Activated CD8-positive, alpha-beta T cell treated with anti-CD3 and anti-CD28 coated beads, Interleukin-2, amount 10 ng/mL, durations not matched to agents 7 days and 5 days (primary cell): ENCODE measurements at regions of chr1 and their contacts with region 1.

Region 1: DNA sequence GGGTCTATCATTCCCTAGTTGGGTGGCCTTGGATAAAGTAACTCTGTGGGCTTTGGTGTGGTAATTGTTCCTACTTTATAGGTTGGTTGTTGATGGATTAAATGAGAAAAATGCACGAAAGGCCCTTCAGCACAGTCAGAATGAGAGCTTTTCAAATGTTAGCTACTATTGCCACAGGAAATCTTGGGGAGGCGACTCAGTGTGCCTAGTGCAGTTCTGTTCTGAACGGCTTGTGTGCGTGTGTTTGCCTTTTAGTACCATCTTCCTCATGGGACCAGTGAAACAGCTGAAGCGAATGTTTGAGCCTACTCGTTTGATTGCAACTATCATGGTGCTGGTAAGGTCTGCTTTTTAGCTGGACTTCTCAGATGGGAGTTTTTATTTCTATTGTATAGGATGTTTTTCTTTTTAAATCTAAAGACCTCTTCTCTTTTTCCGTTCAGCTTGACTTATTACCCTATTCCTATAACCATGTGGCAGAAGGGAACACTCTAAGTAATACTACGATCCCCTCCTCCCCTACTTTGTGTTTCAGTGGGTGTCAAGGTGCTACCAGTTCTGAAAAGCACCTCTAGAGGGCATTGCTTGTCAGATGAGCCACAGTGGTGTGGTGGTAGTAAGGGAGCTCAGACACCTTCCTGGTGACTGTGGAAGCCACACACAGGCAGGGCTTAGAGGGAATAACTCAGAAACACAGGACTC is 9.2 kb downstream of the SFT2D2 start:
- DNase-seq: peak; percentile 65
- ATAC-seq: peak; percentile 93
- H3K4me3 Mint-ChIP-seq: no peak overlapping the region
- H3K27ac Mint-ChIP-seq: no peak overlapping the region
- H3K4me1 Mint-ChIP-seq: peaks cover 44% of the 10 kb centered on the region
- H3K27me3 Mint-ChIP-seq: no peaks in the 10 kb centered on the region

Region 2: GRCh38 chr1:168178638-168179437 is 56.2 kb before region 1 on chr1 and contains the start of gene TIPRL:
- CTCF ChIA-PET with region 1: interaction called, 14 read pairs
- POLR2A ChIA-PET with region 1: interaction called, 3 read pairs
- DNase-seq: peak; percentile 96
- ATAC-seq: peak; percentile 94
- H3K4me3 Mint-ChIP-seq: no peak within 1 kb of the TSS
- H3K27ac Mint-ChIP-seq: no peak within 1 kb of the TSS
- H3K4me1 Mint-ChIP-seq: peaks cover 11% of the 10 kb centered on the region
- H3K27me3 Mint-ChIP-seq: no peaks in the 10 kb centered on the region
- total RNA-seq, gene TIPRL: 48.6 to 53.6 TPM

Region 3: DNA sequence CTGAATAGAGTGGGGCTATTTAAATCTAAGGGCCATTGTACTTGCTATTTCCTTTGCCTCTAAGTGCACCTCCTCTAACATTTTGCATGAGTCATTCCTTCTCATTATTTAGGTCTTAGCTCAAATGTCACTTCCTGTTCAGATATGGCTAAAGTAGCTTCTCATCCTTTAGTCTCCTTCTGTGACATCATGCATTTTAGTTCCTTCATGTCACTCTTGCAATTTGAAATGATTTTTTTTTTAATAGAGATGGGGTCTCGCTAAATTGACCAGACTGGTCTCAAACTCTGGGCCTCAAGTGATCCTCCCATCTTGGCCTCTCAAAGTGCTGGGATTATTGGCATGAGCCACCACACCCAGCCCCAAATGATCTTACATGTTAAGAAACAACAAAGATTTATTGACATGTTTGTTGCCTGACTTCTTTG is 52.3 kb after region 1 on chr1:
- CTCF ChIA-PET with region 1: interaction called, 10 read pairs
- POLR2A ChIA-PET with region 1: no interaction called
- DNase-seq: no peak
- ATAC-seq: peak; percentile 76
- H3K4me3 Mint-ChIP-seq: no peak overlapping the region
- H3K27ac Mint-ChIP-seq: peak overlapping the region; percentile 6
- H3K4me1 Mint-ChIP-seq: peaks cover 28% of the 10 kb centered on the region
- H3K27me3 Mint-ChIP-seq: no peaks in the 10 kb centered on the region

Region 4: DNA sequence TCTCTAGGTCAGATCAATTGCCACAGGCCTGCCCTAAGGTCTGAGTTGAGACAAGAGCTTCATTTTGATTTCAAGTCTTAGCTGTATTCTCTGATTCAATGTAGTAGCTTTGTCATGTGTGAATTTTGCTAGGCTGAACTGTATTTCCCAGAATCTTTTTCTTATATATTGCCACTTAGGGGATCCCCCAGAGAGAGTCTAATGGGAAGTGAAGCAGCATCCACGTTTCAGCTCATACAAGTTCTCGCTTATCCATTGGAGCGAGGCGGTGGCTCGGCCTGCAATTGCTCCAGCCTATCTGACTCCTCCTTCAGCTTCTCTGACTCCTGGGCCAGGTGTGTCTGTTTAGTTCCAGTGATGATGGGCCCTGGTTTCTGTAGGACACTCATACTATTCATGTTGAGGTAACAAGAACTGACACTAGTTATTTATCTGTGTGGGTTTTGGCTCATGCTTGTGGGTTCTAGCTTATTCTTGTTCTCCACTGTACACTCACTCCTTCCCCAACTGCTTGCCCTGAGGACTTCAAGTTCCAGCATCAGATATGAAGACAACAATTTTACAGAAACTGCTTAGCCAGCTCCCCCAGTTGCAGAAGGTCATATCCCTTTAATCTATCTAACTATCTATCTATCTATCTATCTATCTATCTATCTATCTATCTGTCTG is 93.9 kb after region 1 on chr1:
- CTCF ChIA-PET with region 1: interaction called, 43 read pairs
- POLR2A ChIA-PET with region 1: no interaction called
- DNase-seq: no peak
- ATAC-seq: no peak
- H3K4me3 Mint-ChIP-seq: no peak overlapping the region
- H3K27ac Mint-ChIP-seq: no peak overlapping the region
- H3K4me1 Mint-ChIP-seq: no peaks in the 10 kb centered on the region
- H3K27me3 Mint-ChIP-seq: no peaks in the 10 kb centered on the region

Region 5: GRCh38 chr1:168348146-168348709 is 113.2 kb after region 1 on chr1:
- CTCF ChIA-PET with region 1: interaction called, 82 read pairs
- POLR2A ChIA-PET with region 1: no interaction called
- DNase-seq: peak; percentile 46
- ATAC-seq: peak; percentile 67
- H3K4me3 Mint-ChIP-seq: peak overlapping the region; percentile 82
- H3K27ac Mint-ChIP-seq: peak overlapping the region; percentile 91
- H3K4me1 Mint-ChIP-seq: peaks cover 24% of the 10 kb centered on the region
- H3K27me3 Mint-ChIP-seq: no peaks in the 10 kb centered on the region

Region 6: DNA sequence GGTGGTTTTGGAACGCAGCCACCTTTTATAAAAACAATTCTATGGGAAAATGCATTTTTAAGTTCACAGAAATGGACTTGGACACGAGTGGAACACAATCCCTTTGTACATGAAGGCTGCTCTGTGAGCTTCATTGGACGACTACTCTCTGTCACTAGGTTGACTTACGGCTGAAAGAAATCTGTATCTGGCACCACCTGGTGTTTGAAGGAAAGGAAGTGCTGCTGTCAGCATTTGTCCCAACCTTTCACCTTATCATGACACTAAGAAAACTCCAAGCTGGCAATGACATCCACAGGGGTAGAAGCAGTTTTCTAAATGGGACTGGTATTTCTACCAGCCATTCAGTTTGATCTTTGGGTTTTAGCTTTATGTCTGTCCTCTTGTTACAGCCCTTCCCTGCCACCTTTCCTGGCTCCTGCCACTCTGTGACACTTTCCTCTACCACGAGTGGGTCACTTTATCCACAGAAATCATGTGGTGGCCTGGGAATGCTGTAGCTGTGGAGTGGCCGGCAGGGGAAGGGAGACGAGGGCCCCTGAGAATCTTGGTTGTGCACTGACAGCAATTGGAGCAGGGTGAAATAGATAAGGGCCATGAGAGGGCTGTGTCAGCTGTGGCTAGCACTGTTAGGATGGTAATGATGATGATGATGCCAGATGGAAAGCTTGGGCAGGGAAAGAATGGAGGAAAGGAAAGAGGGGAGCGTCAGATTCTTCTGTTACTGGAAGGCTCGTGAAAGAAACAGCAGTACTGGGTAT is 130.9 kb after region 1 on chr1:
- CTCF ChIA-PET with region 1: interaction called, 15 read pairs
- POLR2A ChIA-PET with region 1: no interaction called
- DNase-seq: no peak
- ATAC-seq: no peak
- H3K4me3 Mint-ChIP-seq: no peak overlapping the region
- H3K27ac Mint-ChIP-seq: no peak overlapping the region
- H3K4me1 Mint-ChIP-seq: peaks cover 27% of the 10 kb centered on the region
- H3K27me3 Mint-ChIP-seq: peaks cover 15% of the 10 kb centered on the region